BJ (cell line): ENCODE measurements at regions of chr15 and their contacts with region 1.

Region 1: DNA sequence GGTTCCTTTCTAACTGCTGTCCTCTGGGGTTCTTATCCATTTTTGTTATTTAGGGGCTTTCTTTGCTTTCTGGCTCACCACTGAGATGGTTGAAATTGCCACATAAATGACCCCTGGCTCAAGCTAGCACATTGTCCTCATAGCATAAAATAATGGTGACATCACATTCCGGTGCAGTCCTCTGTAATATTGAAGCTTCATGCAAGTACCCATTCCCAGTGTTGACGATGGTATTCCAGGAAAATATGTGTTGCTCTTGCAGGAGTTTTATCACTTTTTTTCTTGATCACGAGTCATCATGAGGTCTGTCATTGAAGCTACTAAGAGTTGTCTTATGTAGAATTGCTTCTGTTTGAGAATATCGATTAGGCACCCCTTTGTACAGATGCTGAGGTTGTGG is 56.1 kb downstream of the CRTC3 start:
- DNase-seq: no peak
- H3K4me3 ChIP-seq: no peak overlapping the region
- H3K27me3 ChIP-seq: no peaks in the 10 kb centered on the region
- CTCF ChIP-seq: no peak

Region 2: GRCh38 chr15:90598031-90598577 is 12.2 kb after region 1 on chr15:
- CTCF ChIA-PET with region 1: interaction called, 10 read pairs
- POLR2A ChIA-PET with region 1: no interaction called
- DNase-seq: no peak
- H3K4me3 ChIP-seq: no peak overlapping the region
- H3K27me3 ChIP-seq: no peaks in the 10 kb centered on the region
- CTCF ChIP-seq: no peak